ENCODE measurements at regions of chr5 and their contacts with region 1.

Region 1: DNA sequence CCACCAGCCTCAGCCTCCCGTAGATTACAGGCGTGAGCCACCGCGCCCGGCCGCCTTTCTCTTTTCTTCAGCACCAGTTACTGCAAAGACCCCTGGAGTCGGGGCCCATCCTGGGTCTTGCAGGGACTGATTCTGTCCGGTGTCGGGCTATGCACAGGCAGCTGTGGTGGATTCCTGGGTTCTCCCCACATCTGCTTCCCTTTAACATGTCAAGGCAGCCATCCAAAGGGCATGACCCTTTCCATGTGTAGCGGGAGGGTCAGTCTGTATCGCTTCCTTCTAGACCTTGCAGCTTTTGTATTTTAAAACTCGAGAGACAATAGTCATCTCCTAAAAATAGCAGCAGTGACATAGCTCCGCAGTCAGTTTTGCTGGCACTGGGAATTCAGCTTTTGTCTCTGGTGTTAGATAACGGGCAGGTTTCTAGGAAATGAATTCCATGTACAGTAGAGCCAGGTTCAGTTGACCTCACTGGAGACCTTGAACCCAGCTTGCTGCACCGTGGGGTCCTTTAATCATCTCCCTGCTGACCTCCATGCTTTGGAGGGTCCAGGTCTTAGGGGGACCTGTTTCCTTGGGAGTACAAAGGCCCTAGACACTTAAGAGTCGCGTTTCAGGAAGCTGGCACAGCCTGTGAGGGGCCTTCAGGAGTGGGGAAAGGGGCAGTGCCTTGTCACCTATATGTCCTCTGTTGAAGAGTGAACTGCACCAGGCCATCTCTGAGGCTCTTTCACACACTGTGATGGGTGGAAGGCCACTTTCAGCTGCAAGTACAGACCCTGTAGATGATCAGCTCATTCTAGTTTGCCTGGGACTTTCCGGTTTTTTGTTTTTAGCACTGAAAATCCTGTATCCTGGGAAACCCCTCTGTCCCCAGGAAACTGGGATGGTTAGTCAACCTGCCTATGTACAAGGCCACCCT is 13.8 kb downstream of the ANKRD33B start:
- DNase-seq: no peak
- ATAC-seq: no peak
- H3K4me3 Mint-ChIP-seq: peak overlapping the region; percentile 83
- H3K27ac Mint-ChIP-seq: peak overlapping the region; percentile 81
- H3K4me1 Mint-ChIP-seq: peaks cover 85% of the 10 kb centered on the region
- H3K27me3 Mint-ChIP-seq: no peaks in the 10 kb centered on the region
- CTCF ChIP-seq: no peak

Region 2: GRCh38 chr5:10452768-10453331 is 124.8 kb before region 1 on chr5:
- CTCF ChIA-PET with region 1: interaction called, 12 read pairs
- POLR2A ChIA-PET with region 1: no interaction called
- intact Hi-C with region 1: loop called (anchors 2 kb)
- DNase-seq: no peak
- ATAC-seq: peak; percentile 94
- H3K4me3 Mint-ChIP-seq: no peak overlapping the region
- H3K27ac Mint-ChIP-seq: no peak overlapping the region
- H3K4me1 Mint-ChIP-seq: peaks cover 5% of the 10 kb centered on the region
- H3K27me3 Mint-ChIP-seq: no peaks in the 10 kb centered on the region
- CTCF ChIP-seq: peak; percentile 39

Region 3: DNA sequence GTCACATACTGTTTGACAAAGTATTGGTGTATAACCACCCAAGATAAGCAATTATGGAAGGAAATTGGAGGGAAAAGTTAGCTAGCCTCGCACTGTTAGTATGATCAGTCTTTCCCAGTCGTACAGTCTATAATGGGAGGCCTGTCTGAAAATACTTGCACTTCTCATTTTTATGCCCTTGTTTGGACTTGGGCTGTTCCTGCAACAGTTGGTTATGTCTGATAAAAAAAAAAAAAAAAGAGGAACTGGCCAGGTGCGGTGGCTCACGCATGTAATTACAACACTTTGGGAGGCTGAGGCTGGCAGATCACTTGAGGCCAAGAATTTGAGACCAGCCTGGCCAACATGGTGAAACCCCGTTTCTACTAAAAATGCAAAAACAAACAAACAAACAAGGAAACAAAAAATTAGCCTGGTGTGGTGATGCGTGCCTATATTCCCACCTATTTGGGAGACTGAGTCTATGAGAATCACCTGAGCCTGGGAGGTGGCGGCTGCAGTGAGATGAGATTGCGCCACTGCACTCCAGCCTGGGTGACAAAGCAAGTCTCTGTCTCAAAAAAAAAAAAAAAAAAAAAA is 72.0 kb before region 1 on chr5:
- CTCF ChIA-PET with region 1: no interaction called
- POLR2A ChIA-PET with region 1: no interaction called
- intact Hi-C with region 1: loop called (anchors 1 kb)
- DNase-seq: no peak
- ATAC-seq: peak; percentile 98
- H3K4me3 Mint-ChIP-seq: peak overlapping the region; percentile 8
- H3K27ac Mint-ChIP-seq: peak overlapping the region; percentile 76
- H3K4me1 Mint-ChIP-seq: peaks cover 13% of the 10 kb centered on the region
- H3K27me3 Mint-ChIP-seq: no peaks in the 10 kb centered on the region
- CTCF ChIP-seq: no peak

Region 4: DNA sequence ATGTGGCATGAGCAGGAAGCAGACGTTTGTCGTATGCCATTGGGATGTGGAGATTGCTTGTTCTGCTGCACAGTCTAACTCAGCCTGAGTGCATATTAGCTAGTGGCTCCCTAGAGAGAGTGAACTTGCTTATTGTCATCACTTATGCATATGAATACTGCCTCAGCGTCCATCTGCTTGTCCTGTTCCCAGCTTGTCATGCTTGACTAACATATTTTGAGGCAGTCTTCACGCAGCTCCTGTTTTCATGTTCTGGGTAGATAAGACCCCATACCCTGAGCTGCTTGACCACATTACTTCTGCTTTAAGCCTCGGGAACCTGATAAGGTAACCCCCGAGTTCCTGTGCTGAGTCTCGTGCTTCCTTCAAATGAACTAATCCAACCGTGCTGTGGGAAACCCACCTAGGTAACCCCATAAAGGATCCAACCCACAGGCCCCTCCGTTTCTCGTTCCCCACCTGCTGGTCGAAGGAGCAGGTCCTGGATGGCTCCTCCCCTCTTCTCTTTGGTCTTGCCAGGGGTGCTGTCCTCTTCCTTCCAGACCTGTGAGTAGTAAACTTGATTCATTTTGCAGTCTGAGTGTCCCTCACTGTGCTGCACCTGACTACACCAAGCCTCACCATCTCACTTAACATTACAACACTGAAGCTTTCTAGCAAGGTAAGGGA is 11.3 kb after region 1 on chr5:
- CTCF ChIA-PET with region 1: interaction called, 4 read pairs
- POLR2A ChIA-PET with region 1: interaction called, 12 read pairs
- intact Hi-C with region 1: loop called (anchors 1 kb)
- DNase-seq: no peak
- ATAC-seq: peak; percentile 29
- H3K4me3 Mint-ChIP-seq: no peak overlapping the region
- H3K27ac Mint-ChIP-seq: no peak overlapping the region
- H3K4me1 Mint-ChIP-seq: peaks cover 83% of the 10 kb centered on the region
- H3K27me3 Mint-ChIP-seq: no peaks in the 10 kb centered on the region
- CTCF ChIP-seq: no peak

Region 5: DNA sequence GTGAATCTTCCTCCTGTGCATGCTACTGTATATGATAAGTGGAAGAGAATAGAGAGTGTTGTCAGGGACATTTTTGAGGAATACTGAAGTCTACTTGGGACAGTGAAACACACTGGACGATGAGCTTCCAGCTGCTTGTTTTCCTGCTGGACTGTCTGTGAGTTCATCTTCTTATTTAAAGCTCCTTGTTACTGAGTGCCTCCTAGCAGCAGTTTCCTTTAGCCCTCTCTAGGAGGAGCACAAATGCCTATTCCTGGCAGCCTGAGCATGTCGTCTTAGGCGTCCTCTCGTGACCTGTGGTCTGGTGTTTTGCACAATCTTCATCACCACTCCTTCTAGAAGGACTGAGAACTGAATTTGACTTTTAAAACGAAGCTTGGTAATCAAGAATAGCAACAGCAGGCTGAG is 30.0 kb after region 1 on chr5:
- CTCF ChIA-PET with region 1: interaction called, 6 read pairs
- POLR2A ChIA-PET with region 1: interaction called, 19 read pairs
- intact Hi-C with region 1: loop called (anchors 1 kb)
- DNase-seq: no peak
- ATAC-seq: peak; percentile 35
- H3K4me3 Mint-ChIP-seq: peak overlapping the region; percentile 80
- H3K27ac Mint-ChIP-seq: peak overlapping the region; percentile 90
- H3K4me1 Mint-ChIP-seq: peaks cover 67% of the 10 kb centered on the region
- H3K27me3 Mint-ChIP-seq: no peaks in the 10 kb centered on the region
- CTCF ChIP-seq: no peak

Region 6: DNA sequence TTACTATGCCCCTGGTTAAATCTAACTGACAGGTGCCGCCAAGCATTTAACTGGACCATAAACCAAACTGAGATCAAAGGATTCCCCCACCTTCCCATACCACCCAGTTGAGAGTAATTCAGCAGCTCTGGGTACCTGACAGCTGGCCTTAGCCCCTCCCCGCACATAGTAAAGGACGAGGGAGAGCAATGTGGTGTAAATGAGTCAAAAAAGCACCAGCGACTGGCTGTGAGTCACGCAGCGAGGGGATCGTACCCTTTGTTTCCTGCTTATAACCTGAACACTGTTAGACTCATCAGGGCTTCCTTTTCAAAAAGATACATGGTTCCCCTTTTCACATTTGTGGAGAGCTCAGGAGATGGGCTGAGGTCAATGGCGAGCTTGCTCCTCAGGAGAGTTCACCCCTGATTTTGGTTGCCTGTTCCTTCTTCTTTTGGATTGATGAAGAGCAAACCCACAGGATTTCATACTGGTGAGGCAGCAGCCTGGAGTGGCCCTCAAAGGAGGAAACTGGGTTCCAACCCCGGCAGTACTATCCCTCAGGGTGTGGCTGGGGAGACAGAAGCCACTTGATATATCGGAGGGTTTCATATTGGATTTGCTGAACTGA is 57.7 kb after region 1 on chr5:
- CTCF ChIA-PET with region 1: interaction called, 3 read pairs
- POLR2A ChIA-PET with region 1: interaction called, 12 read pairs
- intact Hi-C with region 1: loop called (anchors 1 kb)
- DNase-seq: peak; percentile 57
- ATAC-seq: peak; percentile 64
- H3K4me3 Mint-ChIP-seq: peak overlapping the region; percentile 82
- H3K27ac Mint-ChIP-seq: peak overlapping the region; percentile 99
- H3K4me1 Mint-ChIP-seq: peaks cover 81% of the 10 kb centered on the region
- H3K27me3 Mint-ChIP-seq: no peaks in the 10 kb centered on the region
- CTCF ChIP-seq: no peak

Region 7: GRCh38 chr5:10761166-10761932 is 183.7 kb after region 1 on chr5 and contains the start of gene DAP:
- CTCF ChIA-PET with region 1: no interaction called
- POLR2A ChIA-PET with region 1: no interaction called
- intact Hi-C with region 1: loop called (anchors 5 kb)
- DNase-seq: peak; percentile 92
- ATAC-seq: peak; percentile 82
- H3K4me3 Mint-ChIP-seq: peak within 1 kb of the TSS; percentile 91
- H3K27ac Mint-ChIP-seq: peak within 1 kb of the TSS; percentile 92
- H3K4me1 Mint-ChIP-seq: peaks cover 57% of the 10 kb centered on the region
- H3K27me3 Mint-ChIP-seq: no peaks in the 10 kb centered on the region
- CTCF ChIP-seq: no peak
- total RNA-seq, gene DAP: 50.5 and 51.3 TPM in 2 replicates

Measured in activated B cell treated with CpG ODN at 0.5 μM for 24 hours (primary cell).